ENCODE measurements at regions of chr11 and their contacts with region 1.

Region 1: GRCh38 chr11:124673333-124674167 is at the starts of genes SIAE and SPA17:
- DNase-seq: peak; percentile 98 to 99
- H3K4me3 ChIP-seq: peak within 1 kb of the TSS; percentile 55
- H3K4me3 Mint-ChIP-seq: peak within 1 kb of the TSS; percentile 90
- H3K27ac Mint-ChIP-seq: peak within 1 kb of the TSS; percentile 95
- H3K4me1 ChIP-seq: peaks cover 19% of the 10 kb centered on the region
- H3K4me1 Mint-ChIP-seq: no peaks in the 10 kb centered on the region
- H3K27me3 ChIP-seq: no peaks in the 10 kb centered on the region
- H3K27me3 Mint-ChIP-seq: no peaks in the 10 kb centered on the region
- CTCF ChIP-seq: no peak
- total RNA-seq, gene SIAE: 33.7 and 34.1 TPM in 2 replicates
- total RNA-seq, gene SPA17: 3.7 and 4.2 TPM in 2 replicates

Region 2: DNA sequence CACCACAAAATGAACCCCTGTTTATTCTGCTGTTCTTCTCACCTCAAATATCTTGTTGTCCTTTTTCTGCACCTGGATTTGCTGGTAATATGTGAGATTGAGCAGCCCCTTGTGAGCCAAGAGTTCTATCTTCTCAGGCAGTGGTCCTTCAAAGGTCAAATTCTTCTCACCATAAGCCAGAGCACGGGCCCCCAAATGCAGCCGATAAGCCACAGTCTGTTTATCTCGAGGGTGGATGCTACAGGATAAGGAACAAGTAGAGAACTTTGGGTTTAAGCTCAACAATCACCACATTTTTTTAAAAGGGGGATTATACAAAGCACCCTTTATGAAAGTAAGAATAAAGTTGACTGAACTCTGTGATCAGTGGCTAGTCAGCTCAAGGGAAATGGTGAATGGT is 35.0 kb before region 1 on chr11:
- CTCF ChIA-PET with region 1: no interaction called
- POLR2A ChIA-PET with region 1: no interaction called
- intact Hi-C with region 1: no loop called
- DNase-seq: no peak
- H3K4me3 ChIP-seq: no peak overlapping the region
- H3K4me3 Mint-ChIP-seq: no peak overlapping the region
- H3K27ac Mint-ChIP-seq: no peak overlapping the region
- H3K4me1 ChIP-seq: no peaks in the 10 kb centered on the region
- H3K4me1 Mint-ChIP-seq: no peaks in the 10 kb centered on the region
- H3K27me3 ChIP-seq: no peaks in the 10 kb centered on the region
- H3K27me3 Mint-ChIP-seq: no peaks in the 10 kb centered on the region
- CTCF ChIP-seq: no peak

Region 3: DNA sequence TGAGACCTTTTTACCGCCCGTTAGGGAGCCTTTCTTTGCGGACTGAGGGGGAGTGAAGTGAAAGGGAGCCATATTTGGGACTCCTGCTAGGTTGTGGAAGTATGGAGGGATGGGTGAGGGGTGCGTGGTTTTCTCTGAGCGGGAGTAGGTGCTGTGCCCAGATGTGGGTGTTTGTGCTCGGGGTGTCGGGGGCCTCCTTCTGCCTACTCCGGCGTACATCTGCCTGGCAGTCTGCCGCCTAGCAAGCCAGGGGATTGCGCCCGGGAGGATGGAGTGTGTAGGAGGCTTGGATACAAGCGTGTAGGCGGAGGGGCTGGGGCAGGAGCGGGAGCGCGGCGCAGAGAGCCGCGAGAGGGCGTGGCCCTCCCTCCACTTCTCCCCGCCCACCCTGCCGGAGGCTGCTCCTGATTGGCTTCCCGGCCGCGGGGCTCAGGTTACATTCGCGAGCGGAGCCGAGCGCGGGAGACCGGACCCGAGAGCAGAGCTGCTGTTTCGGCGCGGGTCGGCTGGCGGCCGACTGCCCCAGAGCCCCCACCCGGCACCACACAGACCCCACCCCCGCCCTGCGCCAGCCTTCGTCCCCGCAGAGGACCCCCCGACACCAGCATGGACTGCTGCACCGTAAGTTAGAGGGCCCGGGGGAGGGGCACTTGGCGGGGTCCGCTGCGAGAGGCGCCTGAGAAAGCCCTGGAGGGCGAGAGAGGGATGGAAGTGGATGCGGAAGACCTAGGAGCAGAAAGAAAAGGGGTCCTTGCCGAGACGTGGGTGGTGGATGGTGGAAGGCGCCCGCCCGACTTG is 66.1 kb after region 1 on chr11 and contains the start of gene NRGN:
- CTCF ChIA-PET with region 1: interaction called, 9 read pairs
- POLR2A ChIA-PET with region 1: interaction called, 4 read pairs
- intact Hi-C with region 1: loop called (anchors 1 kb)
- DNase-seq: peak; percentile 96 to 98
- H3K4me3 ChIP-seq: peak within 1 kb of the TSS; percentile 62
- H3K4me3 Mint-ChIP-seq: peak within 1 kb of the TSS; percentile 65
- H3K27ac Mint-ChIP-seq: no peak within 1 kb of the TSS
- H3K4me1 ChIP-seq: peaks cover 6% of the 10 kb centered on the region
- H3K4me1 Mint-ChIP-seq: peaks cover 6% of the 10 kb centered on the region
- H3K27me3 ChIP-seq: peaks cover 8% of the 10 kb centered on the region
- H3K27me3 Mint-ChIP-seq: peaks cover 40% of the 10 kb centered on the region
- CTCF ChIP-seq: no peak
- total RNA-seq, gene NRGN: 5.7 and 7.8 TPM in 2 replicates

Region 4: GRCh38 chr11:124778281-124778680 is 104.7 kb after region 1 on chr11:
- CTCF ChIA-PET with region 1: interaction called, 15 read pairs
- POLR2A ChIA-PET with region 1: no interaction called
- intact Hi-C with region 1: loop called (anchors 1 kb)
- DNase-seq: peak in 1 of 2 experiments; percentile 42
- H3K4me3 ChIP-seq: no peak overlapping the region
- H3K4me3 Mint-ChIP-seq: no peak overlapping the region
- H3K27ac Mint-ChIP-seq: no peak overlapping the region
- H3K4me1 ChIP-seq: no peaks in the 10 kb centered on the region
- H3K4me1 Mint-ChIP-seq: peaks cover 7% of the 10 kb centered on the region
- H3K27me3 ChIP-seq: no peaks in the 10 kb centered on the region
- H3K27me3 Mint-ChIP-seq: no peaks in the 10 kb centered on the region
- CTCF ChIP-seq: peak; percentile 62 to 70

Region 5: GRCh38 chr11:124837491-124837856 is 163.9 kb after region 1 on chr11:
- CTCF ChIA-PET with region 1: interaction called, 47 read pairs
- POLR2A ChIA-PET with region 1: interaction called, 4 read pairs
- intact Hi-C with region 1: loop called (anchors 1 kb)
- DNase-seq: peak; percentile 74 to 76
- H3K4me3 ChIP-seq: no peak overlapping the region
- H3K4me3 Mint-ChIP-seq: peak overlapping the region; percentile 81
- H3K27ac Mint-ChIP-seq: no peak overlapping the region
- H3K4me1 ChIP-seq: peaks cover 13% of the 10 kb centered on the region; the same call in 1 of the 2 replicates
- H3K4me1 Mint-ChIP-seq: peaks cover 6% of the 10 kb centered on the region
- H3K27me3 ChIP-seq: peaks cover 16% of the 10 kb centered on the region
- H3K27me3 Mint-ChIP-seq: peaks cover 33% of the 10 kb centered on the region
- CTCF ChIP-seq: peak in 1 of 2 experiments; percentile 85

Region 6: GRCh38 chr11:124875943-124876817 is 202.6 kb after region 1 on chr11:
- CTCF ChIA-PET with region 1: interaction called, 13 read pairs
- POLR2A ChIA-PET with region 1: no interaction called
- intact Hi-C with region 1: no loop called
- DNase-seq: peak; percentile 86 to 93
- H3K4me3 ChIP-seq: peak overlapping the region; percentile 62
- H3K4me3 Mint-ChIP-seq: peak overlapping the region; percentile 80
- H3K27ac Mint-ChIP-seq: peak overlapping the region; percentile 83
- H3K4me1 ChIP-seq: 0 out of 2 replicates have a peak, but pooled peaks cover 4% of the 10 kb centered on the region
- H3K4me1 Mint-ChIP-seq: peaks cover 12% of the 10 kb centered on the region
- H3K27me3 ChIP-seq: peaks cover 4% of the 10 kb centered on the region
- H3K27me3 Mint-ChIP-seq: peaks cover 16% of the 10 kb centered on the region
- CTCF ChIP-seq: peak; percentile 92 to 97